T-cell (primary cell): ENCODE measurements at regions of chr22 and their contacts with region 1.

Region 1: GRCh38 chr22:17628304-17629166 is at the start of gene ATP6V1E1:
- DNase-seq: peak; percentile 85 to 98 (median 93)
- ATAC-seq: peak; percentile 100
- H3K4me3 ChIP-seq: peak within 1 kb of the TSS; percentile 89 to 100
- H3K4me3 Mint-ChIP-seq: peak within 1 kb of the TSS; percentile 89 to 98 (median 94)
- H3K27ac ChIP-seq: peak within 1 kb of the TSS; percentile 76
- H3K27ac Mint-ChIP-seq: peak within 1 kb of the TSS; percentile 92 to 96
- H3K4me1 ChIP-seq: peaks cover 9 to 39% of the 10 kb centered on the region in 2 experiments
- H3K4me1 Mint-ChIP-seq: peaks cover 31 to 39% (median 36%) of the 10 kb centered on the region in 3 donors
- H3K27me3 ChIP-seq: no peaks in the 10 kb centered on the region
- H3K27me3 Mint-ChIP-seq: no peaks in the 10 kb centered on the region
- total RNA-seq, gene ATP6V1E1: 58.1 to 73.7 (median 70.8) TPM

Region 2: GRCh38 chr22:17612057-17612456 is 16.5 kb before region 1 on chr22:
- CTCF ChIA-PET with region 1: interaction called in 1 of 2 experiments, 4 read pairs
- POLR2A ChIA-PET with region 1: interaction called in 1 of 2 experiments, 11 read pairs
- DNase-seq: no peak
- ATAC-seq: no peak
- H3K4me3 ChIP-seq: no peak overlapping the region
- H3K4me3 Mint-ChIP-seq: no peak overlapping the region
- H3K27ac ChIP-seq: no peak overlapping the region
- H3K27ac Mint-ChIP-seq: no peak overlapping the region
- H3K4me1 ChIP-seq: no peaks in the 10 kb centered on the region
- H3K4me1 Mint-ChIP-seq: peaks cover 5 to 13% (median 5%) of the 10 kb centered on the region in 3 donors
- H3K27me3 ChIP-seq: no peaks in the 10 kb centered on the region
- H3K27me3 Mint-ChIP-seq: no peaks in the 10 kb centered on the region

Region 3: GRCh38 chr22:17732251-17732854 is 103.8 kb after region 1 on chr22:
- CTCF ChIA-PET with region 1: no interaction called
- POLR2A ChIA-PET with region 1: interaction called in 1 of 2 experiments, 11 read pairs
- DNase-seq: no peak
- ATAC-seq: no peak
- H3K4me3 ChIP-seq: no peak overlapping the region
- H3K4me3 Mint-ChIP-seq: no peak overlapping the region
- H3K27ac ChIP-seq: no peak overlapping the region
- H3K27ac Mint-ChIP-seq: peak overlapping the region; percentile 30 to 76
- H3K4me1 ChIP-seq: peaks cover 0 to 3% of the 10 kb centered on the region in 2 experiments
- H3K4me1 Mint-ChIP-seq: peaks cover 14 to 18% (median 15%) of the 10 kb centered on the region in 3 donors
- H3K27me3 ChIP-seq: no peaks in the 10 kb centered on the region
- H3K27me3 Mint-ChIP-seq: no peaks in the 10 kb centered on the region